ENCODE measurements at regions of chr12 and their contacts with region 1.

Region 1: DNA sequence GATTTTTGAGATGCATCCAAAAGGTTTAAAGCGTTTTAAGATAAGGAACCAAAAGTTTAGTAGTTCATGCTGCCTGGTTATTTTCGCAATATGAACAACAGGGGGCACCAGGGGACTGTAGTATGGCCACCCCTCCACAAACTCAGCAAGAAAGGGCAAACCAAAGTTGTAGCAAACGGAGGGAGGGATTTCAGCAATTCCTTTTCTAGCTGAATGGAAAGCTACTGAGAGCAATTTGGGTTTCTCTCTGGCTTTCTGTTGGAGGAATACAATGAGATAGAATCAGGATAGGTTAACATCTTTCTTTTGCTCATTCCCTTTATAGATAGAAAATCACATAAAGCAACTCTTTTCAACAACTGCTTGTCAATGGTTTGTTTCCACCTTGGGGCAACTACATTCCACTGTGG is 62.5 kb downstream of the DRAM1 start:
- DNase-seq: no peak
- ATAC-seq: peak; percentile 45
- H3K4me3 Mint-ChIP-seq: peak overlapping the region; percentile 13
- H3K27ac Mint-ChIP-seq: peak overlapping the region; percentile 74
- H3K4me1 Mint-ChIP-seq: peaks cover 62% of the 10 kb centered on the region
- H3K27me3 Mint-ChIP-seq: no peaks in the 10 kb centered on the region
- CTCF ChIP-seq: peak; percentile 21

Region 2: DNA sequence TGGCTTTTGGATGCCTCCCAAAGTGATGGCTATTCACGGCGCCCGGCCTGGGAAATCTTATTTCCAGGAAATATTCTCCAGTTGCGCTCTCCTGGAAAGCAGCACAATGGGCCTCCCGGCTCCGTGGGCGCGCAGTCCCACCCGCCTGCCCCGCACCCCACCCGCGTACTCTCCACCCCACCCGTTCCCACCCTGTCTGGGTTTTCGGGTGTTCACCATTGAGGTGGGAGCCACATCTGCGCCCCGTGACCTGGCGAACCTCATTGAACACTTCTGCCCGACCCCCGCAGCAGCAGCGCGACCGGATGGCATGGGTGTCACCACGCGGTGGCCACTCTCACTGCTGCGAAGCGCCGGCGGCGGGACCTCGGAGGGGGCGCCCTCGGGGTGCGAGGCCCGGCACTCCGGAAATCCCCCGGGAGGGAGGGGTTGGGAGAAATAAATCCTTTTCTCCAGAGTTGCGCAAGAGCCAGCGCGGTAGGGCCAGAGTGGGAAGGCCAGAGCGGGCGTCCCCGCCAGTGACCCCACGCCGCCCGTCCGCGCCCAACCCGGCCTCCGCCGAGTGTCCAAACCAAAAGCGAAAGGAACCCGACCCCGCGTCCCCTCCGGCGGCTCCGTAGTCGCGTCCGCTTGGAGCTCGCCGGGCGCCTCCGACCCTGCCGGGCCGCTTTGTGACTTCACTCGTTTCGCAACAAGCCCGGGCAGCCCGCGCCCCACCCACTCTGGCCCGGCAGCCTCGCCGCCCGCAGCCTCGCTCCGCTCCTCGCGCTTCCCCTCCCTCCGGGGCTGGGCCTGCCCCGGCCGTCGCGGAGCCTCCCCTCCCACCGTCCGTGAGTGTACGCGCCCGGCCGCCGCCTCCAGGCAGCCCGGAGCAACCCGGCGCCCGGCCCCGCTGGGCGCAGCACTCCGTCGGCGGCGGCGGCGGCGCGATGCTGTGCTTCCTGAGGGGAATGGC is 62.7 kb before region 1 on chr12 and contains the start of gene DRAM1:
- CTCF ChIA-PET with region 1: no interaction called
- POLR2A ChIA-PET with region 1: interaction called, 10 read pairs
- intact Hi-C with region 1: no loop called
- DNase-seq: peak; percentile 77
- ATAC-seq: peak; percentile 93
- H3K4me3 Mint-ChIP-seq: peak within 1 kb of the TSS; percentile 90
- H3K27ac Mint-ChIP-seq: peak within 1 kb of the TSS; percentile 75
- H3K4me1 Mint-ChIP-seq: peaks cover 19% of the 10 kb centered on the region
- H3K27me3 Mint-ChIP-seq: no peaks in the 10 kb centered on the region
- CTCF ChIP-seq: no peak
- total RNA-seq, gene DRAM1: 9.6 and 11.5 TPM in 2 replicates

Region 3: DNA sequence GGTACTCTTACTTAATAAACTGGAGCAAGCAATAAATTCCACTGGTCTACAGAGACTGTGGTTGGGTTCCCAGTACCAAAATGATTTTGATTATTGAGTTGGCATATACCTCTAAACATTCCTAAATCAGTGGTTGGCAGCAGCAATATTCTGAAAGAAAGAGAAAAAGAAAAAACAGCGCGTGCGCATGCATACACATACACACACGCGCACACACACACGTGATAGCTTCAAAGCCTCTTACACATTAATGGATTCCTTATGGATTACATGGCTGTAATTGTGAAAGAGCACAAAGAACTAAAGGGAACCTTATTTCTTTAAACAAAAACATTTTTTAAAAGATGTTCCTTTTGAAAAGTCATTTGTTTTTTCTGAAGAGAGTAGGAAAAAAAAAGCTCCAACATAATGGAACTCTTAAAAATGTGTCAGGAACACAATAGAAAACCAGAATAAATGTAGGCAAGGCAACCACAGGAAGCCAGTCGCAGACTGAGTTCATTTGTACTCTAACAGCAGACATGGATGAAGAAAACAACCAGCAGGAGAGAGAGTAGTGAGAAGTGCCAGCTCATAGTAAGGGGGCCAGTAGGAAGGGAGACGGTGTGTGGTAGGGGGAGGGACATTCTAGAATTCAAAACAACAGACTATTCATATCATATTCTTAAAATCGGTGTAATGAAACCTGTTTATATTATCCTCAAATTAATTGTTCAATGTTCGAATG is 17.6 kb after region 1 on chr12:
- CTCF ChIA-PET with region 1: no interaction called
- POLR2A ChIA-PET with region 1: no interaction called
- intact Hi-C with region 1: no loop called
- DNase-seq: no peak
- ATAC-seq: no peak
- H3K4me3 Mint-ChIP-seq: no peak overlapping the region
- H3K27ac Mint-ChIP-seq: no peak overlapping the region
- H3K4me1 Mint-ChIP-seq: no peaks in the 10 kb centered on the region
- H3K27me3 Mint-ChIP-seq: no peaks in the 10 kb centered on the region
- CTCF ChIP-seq: no peak

Region 4: GRCh38 chr12:102119674-102120563 is 180.1 kb after region 1 on chr12 and contains the starts of genes NUP37 and PARPBP:
- CTCF ChIA-PET with region 1: no interaction called
- POLR2A ChIA-PET with region 1: no interaction called
- intact Hi-C with region 1: loop called (anchors 2 kb)
- DNase-seq: peak; percentile 90
- ATAC-seq: peak; percentile 98
- H3K4me3 Mint-ChIP-seq: peak within 1 kb of the TSS; percentile 95
- H3K27ac Mint-ChIP-seq: peak within 1 kb of the TSS; percentile 91
- H3K4me1 Mint-ChIP-seq: peaks cover 12% of the 10 kb centered on the region
- H3K27me3 Mint-ChIP-seq: no peaks in the 10 kb centered on the region
- CTCF ChIP-seq: no peak
- total RNA-seq, gene NUP37: 27.0 and 29.9 TPM in 2 replicates
- total RNA-seq, gene PARPBP: 4.6 and 5.0 TPM in 2 replicates

Region 5: GRCh38 chr12:102543494-102544485 is 603.9 kb after region 1 on chr12:
- CTCF ChIA-PET with region 1: no interaction called
- POLR2A ChIA-PET with region 1: no interaction called
- intact Hi-C with region 1: loop called (anchors 1 kb)
- DNase-seq: no peak
- ATAC-seq: no peak
- H3K4me3 Mint-ChIP-seq: no peak overlapping the region
- H3K27ac Mint-ChIP-seq: no peak overlapping the region
- H3K4me1 Mint-ChIP-seq: no peaks in the 10 kb centered on the region
- H3K27me3 Mint-ChIP-seq: peaks cover 7% of the 10 kb centered on the region
- CTCF ChIP-seq: no peak

Region 6: GRCh38 chr12:102879144-102879763 is 939.4 kb after region 1 on chr12:
- CTCF ChIA-PET with region 1: no interaction called
- POLR2A ChIA-PET with region 1: no interaction called
- intact Hi-C with region 1: loop called (anchors 5 kb)
- DNase-seq: no peak
- ATAC-seq: peak; percentile 60
- H3K4me3 Mint-ChIP-seq: no peak overlapping the region
- H3K27ac Mint-ChIP-seq: no peak overlapping the region
- H3K4me1 Mint-ChIP-seq: peaks cover 3% of the 10 kb centered on the region
- H3K27me3 Mint-ChIP-seq: peaks cover 18% of the 10 kb centered on the region
- CTCF ChIP-seq: no peak

Measured in activated B cell treated with CpG ODN at 0.5 μM for 24 hours (primary cell).